Activated CD8-positive, alpha-beta T cell treated with anti-CD3 and anti-CD28 coated beads, Interleukin-2, amount 10 ng/mL, durations not matched to agents 7 days and 5 days (primary cell): ENCODE measurements at regions of chr6 and their contacts with region 1.

Region 1: DNA sequence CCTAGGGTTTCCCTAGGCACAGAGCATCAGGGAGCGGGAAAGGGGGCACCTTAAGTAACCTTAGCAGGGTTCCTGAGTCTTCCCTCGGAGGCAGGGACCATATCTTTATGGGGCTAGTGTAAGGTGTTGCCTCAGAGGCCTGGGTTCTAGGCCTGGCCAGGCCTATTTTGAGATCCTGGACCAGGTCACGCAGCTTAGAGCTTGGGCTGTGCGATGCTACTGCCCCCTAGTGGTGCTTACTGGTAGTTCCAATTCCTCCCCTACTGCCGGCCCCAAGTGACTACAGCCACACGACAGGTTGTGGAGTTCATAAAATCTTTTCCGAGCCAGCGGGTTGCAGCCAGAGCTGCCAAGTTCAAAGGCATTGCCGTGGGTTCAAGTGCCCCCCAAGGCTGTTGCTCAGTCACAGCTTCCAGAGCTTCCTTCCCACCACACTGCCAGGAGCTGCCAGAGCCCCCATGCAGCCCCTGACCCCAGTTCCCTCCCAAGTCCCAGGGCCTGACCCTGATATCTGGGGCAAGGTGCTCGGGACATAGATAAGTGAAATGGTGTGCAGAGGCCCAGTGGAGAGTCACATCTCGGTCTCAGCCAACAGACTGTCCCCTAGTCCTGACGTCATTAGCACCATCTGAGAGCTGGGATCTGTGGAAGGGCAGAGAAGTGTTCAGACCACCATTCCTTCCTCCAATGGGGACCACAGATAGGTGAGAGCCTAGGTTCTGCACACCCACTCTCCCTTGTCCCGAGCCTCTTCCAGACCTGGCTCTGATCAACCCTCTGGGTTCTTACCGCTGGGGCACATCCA is 3.3 kb downstream of the LRRC73 start:
- DNase-seq: peak; percentile 89
- ATAC-seq: peak; percentile 67
- H3K4me3 Mint-ChIP-seq: no peak overlapping the region
- H3K27ac Mint-ChIP-seq: no peak overlapping the region
- H3K4me1 Mint-ChIP-seq: peaks cover 13% of the 10 kb centered on the region
- H3K27me3 Mint-ChIP-seq: peaks cover 15% of the 10 kb centered on the region

Region 2: DNA sequence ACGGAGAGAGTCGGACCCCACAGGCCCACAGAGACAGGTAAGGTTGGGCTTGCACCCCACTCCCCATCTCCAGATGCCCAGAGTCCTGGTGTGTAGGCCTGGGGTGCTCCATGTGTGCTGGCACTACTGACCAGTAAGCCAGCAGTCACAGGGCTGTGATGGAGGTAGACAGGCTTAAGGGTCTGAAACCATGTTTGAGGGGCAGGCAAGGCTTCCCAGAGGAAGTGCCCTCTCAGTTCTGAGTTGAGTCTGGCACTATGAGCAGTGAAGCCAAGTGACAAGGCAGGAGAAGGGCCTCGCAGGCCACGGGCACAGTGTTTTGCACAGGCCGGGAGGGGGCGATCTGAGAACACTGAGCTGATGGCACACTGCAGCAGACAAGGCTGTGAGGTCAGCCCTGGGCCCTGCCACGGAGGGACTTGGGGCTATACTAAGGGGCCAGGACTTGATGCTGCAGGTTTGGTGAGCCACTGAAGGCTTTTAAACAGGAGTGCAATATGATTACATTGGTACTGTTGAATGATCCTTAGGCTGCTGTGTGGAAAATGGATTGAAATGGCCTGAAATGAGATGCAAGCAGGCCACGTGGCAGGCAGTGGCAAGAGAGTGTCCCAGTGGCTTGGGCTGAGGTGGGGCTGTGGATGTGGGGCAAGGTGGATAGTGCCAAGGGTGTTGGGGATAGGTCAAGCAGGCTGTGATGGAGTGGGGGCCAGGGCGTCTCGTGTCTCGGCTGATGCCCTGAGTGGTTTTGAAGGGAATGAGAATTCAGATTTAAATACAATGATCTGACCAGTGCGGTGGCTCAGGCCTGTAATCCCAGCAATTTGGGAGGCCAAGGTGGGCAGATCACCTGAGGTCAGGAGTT is 243.3 kb before region 1 on chr6:
- CTCF ChIA-PET with region 1: interaction called, 27 read pairs
- POLR2A ChIA-PET with region 1: no interaction called
- DNase-seq: peak; percentile 86
- ATAC-seq: peak; percentile 94
- H3K4me3 Mint-ChIP-seq: no peak overlapping the region
- H3K27ac Mint-ChIP-seq: no peak overlapping the region
- H3K4me1 Mint-ChIP-seq: no peaks in the 10 kb centered on the region
- H3K27me3 Mint-ChIP-seq: peaks cover 22% of the 10 kb centered on the region

Region 3: GRCh38 chr6:43427406-43428111 is 79.3 kb before region 1 on chr6 and contains the start of gene ABCC10:
- CTCF ChIA-PET with region 1: interaction called, 11 read pairs
- POLR2A ChIA-PET with region 1: no interaction called
- DNase-seq: peak; percentile 97
- ATAC-seq: peak; percentile 97
- H3K4me3 Mint-ChIP-seq: peak within 1 kb of the TSS; percentile 98
- H3K27ac Mint-ChIP-seq: peak within 1 kb of the TSS; percentile 97
- H3K4me1 Mint-ChIP-seq: peaks cover 23% of the 10 kb centered on the region
- H3K27me3 Mint-ChIP-seq: no peaks in the 10 kb centered on the region
- total RNA-seq, gene ABCC10: 38.8 to 39.8 TPM

Region 4: DNA sequence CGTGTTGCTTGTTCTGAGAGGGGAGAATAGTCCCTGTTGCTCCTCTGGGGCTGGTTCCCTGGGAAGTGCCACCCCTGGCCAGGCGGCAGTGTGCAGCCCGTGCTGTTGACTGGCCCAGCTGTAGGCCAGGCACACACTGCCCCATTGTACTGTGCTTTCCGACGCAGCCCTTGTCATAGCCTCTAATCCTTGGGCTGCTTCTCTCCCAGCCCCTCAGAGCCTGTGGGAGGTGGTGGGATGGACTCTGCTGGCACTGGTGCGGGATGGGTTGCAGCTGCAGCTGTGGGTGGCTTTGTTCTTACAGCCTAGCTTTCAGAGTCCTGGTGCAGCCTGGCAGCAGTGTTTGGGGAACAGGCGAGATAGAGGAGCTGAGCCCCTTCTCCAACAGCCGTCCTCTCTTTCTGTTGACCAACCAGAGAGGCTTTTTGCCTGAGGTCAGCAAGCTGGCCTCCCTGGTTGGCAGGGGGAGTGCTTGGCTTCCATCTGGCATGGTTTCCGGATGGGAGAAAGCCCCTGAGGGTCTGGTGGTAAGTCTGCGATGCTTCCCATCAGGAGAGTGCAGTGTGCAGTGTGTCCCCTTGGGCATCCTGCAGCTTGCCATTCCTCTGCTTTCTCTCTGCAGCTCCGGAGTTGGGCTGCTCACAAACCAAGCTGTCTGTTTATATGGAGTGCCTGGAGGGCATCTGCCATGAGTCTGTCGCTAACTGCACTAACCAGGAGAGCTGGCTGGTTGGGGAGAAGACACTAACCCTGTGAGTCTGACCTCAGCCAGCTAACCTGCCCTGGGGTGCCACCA is 17.4 kb before region 1 on chr6:
- CTCF ChIA-PET with region 1: interaction called, 65 read pairs
- POLR2A ChIA-PET with region 1: no interaction called
- DNase-seq: no peak
- ATAC-seq: no peak
- H3K4me3 Mint-ChIP-seq: no peak overlapping the region
- H3K27ac Mint-ChIP-seq: no peak overlapping the region
- H3K4me1 Mint-ChIP-seq: peaks cover 8% of the 10 kb centered on the region
- H3K27me3 Mint-ChIP-seq: no peaks in the 10 kb centered on the region

Region 5: GRCh38 chr6:43516697-43517504 is 10.0 kb after region 1 on chr6 and contains the starts of genes POLR1C and YIPF3:
- CTCF ChIA-PET with region 1: interaction called, 43 read pairs
- POLR2A ChIA-PET with region 1: interaction called, 9 read pairs
- DNase-seq: peak; percentile 99
- ATAC-seq: peak; percentile 92
- H3K4me3 Mint-ChIP-seq: no peak within 1 kb of the TSS
- H3K27ac Mint-ChIP-seq: no peak within 1 kb of the TSS
- H3K4me1 Mint-ChIP-seq: peaks cover 22% of the 10 kb centered on the region
- H3K27me3 Mint-ChIP-seq: no peaks in the 10 kb centered on the region
- total RNA-seq, gene POLR1C: 34.7 to 35.4 TPM
- total RNA-seq, gene YIPF3: 55.6 to 59.0 TPM